Activated CD4-positive, alpha-beta memory T cell treated with anti-CD3 and anti-CD28 coated beads for 36 hours (primary cell): ENCODE measurements at regions of chr7 and their contacts with region 1.

Region 1: GRCh38 chr7:4871930-4872675 is 10.3 kb upstream of the PAPOLB start:
- DNase-seq: no peak
- H3K4me3 Mint-ChIP-seq: no peak overlapping the region
- H3K27ac Mint-ChIP-seq: no peak overlapping the region
- H3K4me1 Mint-ChIP-seq: no peaks in the 10 kb centered on the region
- H3K27me3 Mint-ChIP-seq: peaks cover 23% of the 10 kb centered on the region

Region 2: DNA sequence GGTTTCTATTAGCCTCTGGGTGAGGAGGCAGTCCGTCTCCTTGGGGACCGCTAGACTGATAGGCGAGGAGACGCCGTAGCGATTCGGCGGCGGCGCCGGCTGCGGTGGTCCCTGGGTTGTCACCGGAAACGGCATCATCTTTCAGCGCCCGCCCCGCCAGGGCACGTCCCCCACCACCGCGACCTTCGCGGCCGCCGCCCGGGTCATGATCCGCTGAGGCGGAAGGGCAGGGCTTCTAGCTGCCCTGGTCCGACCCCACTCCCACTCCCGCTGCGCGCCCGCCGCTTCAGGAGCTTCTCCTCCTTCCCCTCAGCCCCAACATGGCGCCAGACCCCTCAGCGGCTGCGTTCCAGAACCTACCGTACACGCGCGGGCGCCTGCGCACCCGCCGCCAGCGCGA is 10.4 kb before region 1 on chr7 and contains the start of gene PAPOLB:
- CTCF ChIA-PET with region 1: no interaction called
- POLR2A ChIA-PET with region 1: no interaction called
- intact Hi-C with region 1: no loop called
- DNase-seq: no peak
- H3K4me3 Mint-ChIP-seq: peak within 1 kb of the TSS; percentile 14
- H3K27ac Mint-ChIP-seq: no peak within 1 kb of the TSS
- H3K4me1 Mint-ChIP-seq: no peaks in the 10 kb centered on the region
- H3K27me3 Mint-ChIP-seq: peaks cover 56% of the 10 kb centered on the region
- total RNA-seq, gene PAPOLB: not detected

Region 3: GRCh38 chr7:4905178-4905820 is 33.2 kb after region 1 on chr7:
- CTCF ChIA-PET with region 1: no interaction called
- POLR2A ChIA-PET with region 1: no interaction called
- intact Hi-C with region 1: loop called (anchors 2 kb)
- DNase-seq: no peak
- H3K4me3 Mint-ChIP-seq: no peak overlapping the region
- H3K27ac Mint-ChIP-seq: no peak overlapping the region
- H3K4me1 Mint-ChIP-seq: no peaks in the 10 kb centered on the region
- H3K27me3 Mint-ChIP-seq: peaks cover 13% of the 10 kb centered on the region

Region 4: DNA sequence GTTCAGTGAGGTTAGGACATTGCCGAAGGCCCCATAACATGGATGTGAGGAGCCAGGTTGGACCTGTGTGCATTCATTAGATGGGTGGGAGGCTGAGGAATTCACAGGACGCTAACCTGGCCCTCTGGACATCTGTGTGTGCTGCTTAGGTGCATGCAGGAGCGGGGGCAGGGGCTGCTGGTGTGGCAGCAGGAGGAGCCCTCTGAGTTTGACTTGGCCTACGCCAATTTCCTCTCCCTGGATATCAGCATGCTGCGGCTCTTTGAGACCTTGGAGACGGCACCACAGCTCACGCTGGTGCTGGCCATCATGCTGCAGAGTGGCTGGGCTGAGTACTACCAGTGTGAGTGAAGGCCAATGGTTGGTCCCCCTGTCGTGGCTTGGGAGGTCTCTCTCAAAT is 121.4 kb after region 1 on chr7:
- CTCF ChIA-PET with region 1: no interaction called
- POLR2A ChIA-PET with region 1: no interaction called
- intact Hi-C with region 1: no loop called
- DNase-seq: no peak
- H3K4me3 Mint-ChIP-seq: no peak overlapping the region
- H3K27ac Mint-ChIP-seq: no peak overlapping the region
- H3K4me1 Mint-ChIP-seq: peaks cover 2% of the 10 kb centered on the region
- H3K27me3 Mint-ChIP-seq: no peaks in the 10 kb centered on the region